Heart right ventricle (tissue), 16 donors: ENCODE measurements at regions of chr7 and their contacts with region 1.

Region 1: DNA sequence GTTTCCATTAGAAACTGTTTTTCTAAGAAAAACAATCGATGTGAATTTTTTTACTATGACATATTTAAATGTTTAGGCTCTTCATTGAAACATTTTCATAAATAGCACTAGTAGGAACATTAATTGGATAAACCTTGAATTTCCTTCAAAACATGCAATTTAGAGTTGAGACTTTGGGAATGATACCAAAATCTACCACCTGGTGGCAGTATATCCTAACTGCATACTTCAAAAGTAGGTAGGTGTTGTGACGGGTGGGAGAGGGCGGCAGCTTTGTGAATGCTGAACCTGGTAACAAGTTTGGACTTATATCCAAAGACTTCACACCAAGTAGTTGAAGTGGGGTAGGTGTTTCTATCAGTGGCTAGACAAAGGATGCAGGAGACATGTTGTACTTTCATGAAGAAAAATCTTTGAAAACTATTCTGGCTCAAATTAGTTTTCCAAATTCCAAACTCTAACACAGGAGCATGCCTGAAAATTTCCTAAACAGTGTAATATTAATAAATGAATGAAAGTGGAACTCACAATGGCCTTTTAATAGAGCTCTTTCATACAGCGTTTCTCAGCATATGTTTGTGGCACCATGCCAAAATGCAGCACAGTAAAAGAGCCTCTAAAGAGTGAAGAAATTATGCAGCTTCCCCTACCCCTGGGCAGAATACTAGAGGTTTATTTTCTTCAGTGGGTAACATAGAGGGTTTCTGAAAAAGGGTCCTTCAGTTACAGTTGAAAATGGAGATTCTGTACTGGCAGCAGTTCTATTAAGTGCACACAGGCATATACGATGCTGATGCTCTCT is 201.0 kb upstream of the TPK1 start:
- DNase-seq: peak; percentile 10 to 22
- ATAC-seq: no peak
- H3K4me3 ChIP-seq: no peak overlapping the region
- H3K27ac ChIP-seq: no peak overlapping the region
- H3K4me1 ChIP-seq: peaks cover 0 to 3% (median 0%) of the 10 kb centered on the region in 9 donors
- H3K27me3 ChIP-seq: peaks cover 0 to 4% (median 0%) of the 10 kb centered on the region in 7 donors
- CTCF ChIP-seq: peak; percentile 33 to 85 (median 73)

Region 2: DNA sequence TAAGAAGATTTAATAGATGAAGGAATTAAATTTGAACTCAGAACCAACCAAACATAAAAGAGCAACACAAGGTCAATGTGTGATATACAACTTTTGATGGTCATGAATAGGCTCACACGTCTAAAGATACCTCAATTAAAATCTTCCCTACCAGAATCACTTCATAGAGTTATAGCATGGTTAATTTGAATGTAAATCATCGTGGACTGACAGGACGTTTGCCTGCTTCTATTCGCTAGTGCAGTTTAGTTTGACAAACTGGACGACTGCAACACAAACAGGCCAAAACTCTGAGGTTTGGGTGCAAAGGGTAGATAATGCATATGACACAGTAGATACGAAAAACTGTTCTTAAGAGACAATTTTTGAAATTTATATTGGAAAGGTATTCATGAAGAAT is 1047.3 kb after region 1 on chr7:
- intact Hi-C with region 1: loop called in 1 of 10 experiments (anchors 10 kb)
- DNase-seq: no peak
- ATAC-seq: no peak
- H3K4me3 ChIP-seq: no peak overlapping the region
- H3K27ac ChIP-seq: no peak overlapping the region
- H3K4me1 ChIP-seq: no peaks in the 10 kb centered on the region
- H3K27me3 ChIP-seq: no peaks in the 10 kb centered on the region
- CTCF ChIP-seq: no peak

Region 3: GRCh38 chr7:146090023-146090645 is 1053.3 kb after region 1 on chr7:
- intact Hi-C with region 1: loop called in 5 of 10 experiments (anchors 10 kb)
- DNase-seq: no peak
- ATAC-seq: no peak
- H3K4me3 ChIP-seq: no peak overlapping the region
- H3K27ac ChIP-seq: no peak overlapping the region
- H3K4me1 ChIP-seq: no peaks in the 10 kb centered on the region
- H3K27me3 ChIP-seq: peaks cover 0 to 5% (median 0%) of the 10 kb centered on the region in 7 donors
- CTCF ChIP-seq: peak in 8 of 9 donors; percentile 38 to 69 (median 63)